CD4-positive, alpha-beta memory T cell (primary cell): ENCODE measurements at regions of chrX and their contacts with region 1.

Region 1: DNA sequence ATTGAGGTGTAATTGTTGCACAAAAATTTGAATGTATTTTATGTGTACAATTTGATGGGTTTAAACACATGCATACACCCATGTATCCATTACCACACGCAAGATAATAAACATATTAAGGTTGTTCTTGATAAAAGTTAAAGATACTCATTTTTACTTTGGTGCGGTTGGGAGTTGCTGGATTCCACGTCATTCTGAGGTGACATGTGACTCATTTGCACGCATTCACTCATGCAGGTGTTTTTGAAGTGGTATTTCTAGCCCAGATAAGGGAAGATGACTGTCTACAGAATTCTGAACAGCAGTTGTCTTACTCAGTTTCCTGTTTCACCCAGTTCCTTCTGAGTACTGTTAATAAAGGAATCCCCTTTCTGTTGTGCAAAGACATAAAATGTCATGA is 142.0 kb downstream of the RTL3 start:
- DNase-seq: peak; percentile 81 to 90 (median 87)
- H3K4me3 ChIP-seq: no peak overlapping the region
- H3K4me3 Mint-ChIP-seq: peak overlapping the region in 7 of 8 donors; percentile 45 to 78 (median 61)
- H3K27ac ChIP-seq: peak overlapping the region; percentile 48
- H3K27ac Mint-ChIP-seq: peak overlapping the region; percentile 83 to 98 (median 95)
- H3K4me1 ChIP-seq: peaks cover 42% of the 10 kb centered on the region
- H3K4me1 Mint-ChIP-seq: peaks cover 21 to 46% (median 35%) of the 10 kb centered on the region in 4 donors
- H3K27me3 ChIP-seq: no peaks in the 10 kb centered on the region
- H3K27me3 Mint-ChIP-seq: no peaks in the 10 kb centered on the region

Region 2: DNA sequence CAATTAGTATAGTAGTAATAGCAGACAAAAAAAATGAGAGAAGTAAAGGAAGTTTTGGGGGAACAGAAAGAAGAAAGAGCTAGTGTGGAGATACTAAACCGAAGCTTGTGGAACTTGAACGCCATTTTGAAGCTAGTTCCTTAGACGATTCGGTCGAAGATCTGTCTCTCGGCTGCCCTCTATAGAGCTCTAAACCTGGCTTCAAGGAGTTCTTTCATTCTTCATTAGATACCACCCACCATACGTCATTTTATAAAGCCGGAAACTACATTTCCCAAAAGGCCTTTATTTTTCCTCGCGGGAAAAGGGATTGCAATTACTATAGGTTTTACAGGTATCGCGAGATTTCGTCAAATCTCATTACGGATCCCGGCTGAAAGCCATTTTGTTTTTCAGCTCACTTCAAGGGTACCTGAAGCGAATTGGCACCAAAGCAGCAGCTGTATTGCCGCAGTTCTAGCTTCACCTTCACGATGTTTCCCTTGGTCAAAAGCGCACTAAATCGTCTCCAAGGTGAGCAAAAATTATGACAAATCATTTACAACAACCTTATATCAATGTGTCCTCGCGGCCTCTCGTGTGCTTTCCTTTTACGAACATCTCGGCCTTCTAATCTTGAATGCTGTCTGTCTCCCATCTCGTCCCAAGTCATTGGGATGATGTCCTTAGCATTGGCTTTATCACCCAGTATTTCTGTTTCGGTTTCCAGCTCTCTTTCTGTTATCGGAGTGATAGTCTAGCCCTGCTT is 617.9 kb before region 1 on chrX and contains the start of gene COX7B:
- CTCF ChIA-PET with region 1: no interaction called
- POLR2A ChIA-PET with region 1: no interaction called
- intact Hi-C with region 1: loop called (anchors 10 kb)
- DNase-seq: peak; percentile 82 to 91 (median 88)
- H3K4me3 ChIP-seq: peak within 1 kb of the TSS; percentile 42 to 76
- H3K4me3 Mint-ChIP-seq: peak within 1 kb of the TSS; percentile 84 to 96 (median 91)
- H3K27ac ChIP-seq: peak within 1 kb of the TSS; percentile 81
- H3K27ac Mint-ChIP-seq: peak within 1 kb of the TSS; percentile 88 to 99 (median 95)
- H3K4me1 ChIP-seq: peaks cover 25% of the 10 kb centered on the region
- H3K4me1 Mint-ChIP-seq: peaks cover 7 to 49% (median 20%) of the 10 kb centered on the region in 4 donors
- H3K27me3 ChIP-seq: no peaks in the 10 kb centered on the region
- H3K27me3 Mint-ChIP-seq: no peaks in the 10 kb centered on the region
- total RNA-seq, gene COX7B: 115 to 126 TPM

Region 3: DNA sequence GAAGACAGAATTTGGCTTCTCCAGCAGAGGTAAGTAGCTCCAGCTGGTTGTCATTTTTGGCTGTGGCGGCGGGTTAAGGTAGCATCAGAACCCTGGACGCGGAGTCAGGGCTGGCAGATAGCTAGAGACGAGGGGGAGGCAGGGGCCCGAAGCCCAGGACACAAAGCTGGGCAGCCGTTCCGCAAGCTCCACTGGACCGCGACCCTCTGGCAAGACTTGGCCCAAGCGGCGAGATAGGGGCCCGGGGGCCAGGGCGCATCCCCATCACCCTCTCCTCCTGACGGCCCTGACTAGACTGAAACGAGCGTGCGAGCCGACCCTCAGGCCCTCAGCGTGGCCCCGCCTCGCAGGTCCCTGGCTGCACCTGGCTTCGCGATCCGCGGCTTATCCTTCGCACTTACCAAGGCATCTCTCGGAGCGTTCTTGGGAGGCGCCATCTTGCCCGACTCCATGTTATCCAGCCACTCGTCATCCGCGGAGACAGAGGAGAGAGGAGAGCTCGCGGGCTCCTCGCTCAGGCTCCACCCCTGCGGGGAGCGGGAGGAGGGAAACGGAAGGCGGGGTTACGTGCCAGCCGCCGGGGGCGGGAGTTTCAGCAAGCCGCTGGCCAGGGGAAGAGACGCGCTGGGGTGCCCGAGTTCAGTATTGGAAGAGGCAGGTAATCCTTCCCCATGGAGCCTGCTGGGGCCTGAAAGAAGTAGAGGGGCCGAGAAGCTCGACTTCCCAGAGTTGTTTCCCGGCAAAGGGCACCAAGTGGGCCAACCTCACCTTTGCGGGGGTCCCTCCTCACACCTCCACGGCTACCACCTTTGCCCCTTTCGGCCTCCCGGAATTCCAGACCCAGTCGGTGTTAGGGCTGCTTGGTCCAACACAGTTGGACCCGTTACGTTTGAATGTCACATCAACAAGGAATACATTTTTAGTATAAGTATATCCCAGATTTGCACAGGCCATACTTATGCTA is 377.7 kb before region 1 on chrX and contains the start of gene TAF9B:
- CTCF ChIA-PET with region 1: no interaction called
- POLR2A ChIA-PET with region 1: interaction called, 4 read pairs
- intact Hi-C with region 1: loop called (anchors 10 kb)
- DNase-seq: peak; percentile 80 to 89 (median 83)
- H3K4me3 ChIP-seq: peak within 1 kb of the TSS; percentile 29 to 67
- H3K4me3 Mint-ChIP-seq: peak within 1 kb of the TSS; percentile 91 to 97 (median 94)
- H3K27ac ChIP-seq: peak within 1 kb of the TSS; percentile 85
- H3K27ac Mint-ChIP-seq: peak within 1 kb of the TSS; percentile 89 to 97 (median 95)
- H3K4me1 ChIP-seq: peaks cover 6% of the 10 kb centered on the region
- H3K4me1 Mint-ChIP-seq: peaks cover 3 to 7% (median 5%) of the 10 kb centered on the region in 4 donors
- H3K27me3 ChIP-seq: no peaks in the 10 kb centered on the region
- H3K27me3 Mint-ChIP-seq: no peaks in the 10 kb centered on the region
- total RNA-seq, gene TAF9B: 23.6 to 28.3 TPM

Region 4: DNA sequence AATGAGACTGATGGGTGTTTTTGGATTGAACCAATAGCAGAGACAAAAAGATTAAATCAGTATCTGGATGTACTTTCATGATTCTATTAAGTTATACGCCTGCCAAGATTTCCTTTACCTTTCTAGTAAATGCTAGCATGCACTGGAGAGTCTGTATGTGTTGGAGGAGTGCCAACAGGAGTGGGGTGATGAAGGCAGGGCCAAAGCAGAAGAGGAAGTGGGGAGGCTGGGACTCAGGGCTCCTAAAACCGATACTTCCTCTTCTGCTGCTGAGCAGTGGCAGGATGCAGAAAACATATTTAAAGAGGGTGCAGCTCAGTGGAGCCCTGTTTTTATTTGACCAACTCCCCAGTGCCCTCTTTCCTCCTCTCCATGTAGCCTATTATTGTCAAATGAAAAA is 195.3 kb before region 1 on chrX:
- CTCF ChIA-PET with region 1: no interaction called
- POLR2A ChIA-PET with region 1: interaction called, 3 read pairs
- intact Hi-C with region 1: loop called (anchors 2 kb)
- DNase-seq: peak; percentile 66 to 77 (median 74)
- H3K4me3 ChIP-seq: no peak overlapping the region
- H3K4me3 Mint-ChIP-seq: peak overlapping the region; percentile 44 to 75 (median 60)
- H3K27ac ChIP-seq: no peak overlapping the region
- H3K27ac Mint-ChIP-seq: peak overlapping the region; percentile 54 to 90 (median 83)
- H3K4me1 ChIP-seq: peaks cover 30% of the 10 kb centered on the region
- H3K4me1 Mint-ChIP-seq: peaks cover 20 to 42% (median 28%) of the 10 kb centered on the region in 4 donors
- H3K27me3 ChIP-seq: no peaks in the 10 kb centered on the region
- H3K27me3 Mint-ChIP-seq: no peaks in the 10 kb centered on the region

Region 5: DNA sequence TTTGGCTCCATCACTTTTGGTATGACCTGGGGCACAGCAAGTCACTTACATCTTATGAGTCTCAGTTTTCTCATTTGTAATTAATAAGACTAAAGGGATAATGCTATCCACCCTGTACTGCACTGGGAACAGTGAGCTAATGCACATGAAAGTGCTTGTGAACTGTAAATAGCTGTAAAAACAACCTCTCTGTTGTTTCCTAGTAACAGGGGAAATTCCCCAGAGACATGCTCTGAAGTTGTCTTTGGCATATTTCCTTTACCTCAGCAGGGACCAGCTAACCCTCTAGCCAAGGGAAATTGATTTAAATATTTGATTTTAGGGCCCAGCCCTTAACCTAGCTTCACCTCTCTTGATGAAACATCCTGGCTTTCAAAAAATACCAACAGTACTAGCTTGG is 183.6 kb before region 1 on chrX:
- CTCF ChIA-PET with region 1: no interaction called
- POLR2A ChIA-PET with region 1: no interaction called
- intact Hi-C with region 1: loop called (anchors 1 kb)
- DNase-seq: peak; percentile 55 to 79 (median 69)
- H3K4me3 ChIP-seq: no peak overlapping the region
- H3K4me3 Mint-ChIP-seq: peak overlapping the region in 4 of 8 donors; percentile 4 to 70 (median 60)
- H3K27ac ChIP-seq: peak overlapping the region; percentile 53
- H3K27ac Mint-ChIP-seq: peak overlapping the region; percentile 86 to 95 (median 93)
- H3K4me1 ChIP-seq: peaks cover 74% of the 10 kb centered on the region
- H3K4me1 Mint-ChIP-seq: peaks cover 38 to 81% (median 54%) of the 10 kb centered on the region in 4 donors
- H3K27me3 ChIP-seq: no peaks in the 10 kb centered on the region
- H3K27me3 Mint-ChIP-seq: no peaks in the 10 kb centered on the region

Region 6: GRCh38 chrX:78532363-78532762 is 15.2 kb after region 1 on chrX:
- CTCF ChIA-PET with region 1: no interaction called
- POLR2A ChIA-PET with region 1: interaction called, 10 read pairs
- intact Hi-C with region 1: no loop called
- DNase-seq: no peak
- H3K4me3 ChIP-seq: no peak overlapping the region
- H3K4me3 Mint-ChIP-seq: no peak overlapping the region
- H3K27ac ChIP-seq: no peak overlapping the region
- H3K27ac Mint-ChIP-seq: peak overlapping the region in 1 of 7 donors; percentile 8
- H3K4me1 ChIP-seq: no peaks in the 10 kb centered on the region
- H3K4me1 Mint-ChIP-seq: peaks cover 0 to 10% (median 2%) of the 10 kb centered on the region in 4 donors
- H3K27me3 ChIP-seq: no peaks in the 10 kb centered on the region
- H3K27me3 Mint-ChIP-seq: no peaks in the 10 kb centered on the region

Region 7: GRCh38 chrX:79440336-79440735 is 923.2 kb after region 1 on chrX:
- CTCF ChIA-PET with region 1: no interaction called
- POLR2A ChIA-PET with region 1: no interaction called
- intact Hi-C with region 1: no loop called
- DNase-seq: no peak
- H3K4me3 ChIP-seq: no peak overlapping the region
- H3K4me3 Mint-ChIP-seq: no peak overlapping the region
- H3K27ac ChIP-seq: no peak overlapping the region
- H3K27ac Mint-ChIP-seq: no peak overlapping the region
- H3K4me1 ChIP-seq: no peaks in the 10 kb centered on the region
- H3K4me1 Mint-ChIP-seq: peaks cover 0 to 3% (median 0%) of the 10 kb centered on the region in 4 donors
- H3K27me3 ChIP-seq: no peaks in the 10 kb centered on the region
- H3K27me3 Mint-ChIP-seq: no peaks in the 10 kb centered on the region